PC-9 (cell line): ENCODE measurements at regions of chr2 and their contacts with region 1.

Region 1: DNA sequence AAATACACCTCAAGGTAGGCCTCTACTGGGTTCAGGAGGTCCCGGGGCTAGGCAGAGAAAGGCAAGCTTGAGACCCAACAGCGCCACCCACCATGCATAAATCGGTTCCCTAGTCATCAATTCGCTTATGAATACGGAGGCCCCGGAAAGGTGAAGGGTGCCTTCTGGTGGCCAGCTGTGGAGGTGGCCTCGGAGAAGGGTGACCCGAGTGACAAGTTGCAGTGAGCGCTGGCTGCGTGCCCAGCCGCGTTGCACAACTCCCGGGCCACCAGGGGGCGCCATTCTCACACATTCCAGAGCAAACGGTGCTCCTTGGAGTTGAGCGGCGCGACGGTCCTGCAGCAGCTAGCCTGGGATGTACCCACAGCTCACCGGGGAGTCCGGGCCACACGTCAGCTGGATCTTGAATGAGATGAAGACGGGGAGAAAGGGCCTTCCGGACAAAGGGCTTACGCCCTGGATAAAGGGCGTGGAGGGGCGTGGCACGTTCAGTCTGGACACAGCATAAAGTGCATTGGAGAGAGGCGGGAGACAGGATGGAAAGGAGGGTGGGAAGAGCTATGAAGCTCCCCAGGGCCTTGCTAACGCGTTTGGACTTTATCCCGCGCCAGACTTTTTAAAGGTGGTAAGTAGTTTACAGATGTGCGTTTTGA is 20.4 kb downstream of the TMSB10 start:
- DNase-seq: peak; percentile 92 to 99
- H3K4me3 ChIP-seq: peak overlapping the region; percentile 52
- H3K27ac ChIP-seq: no peak overlapping the region
- H3K4me1 ChIP-seq: peaks cover 9% of the 10 kb centered on the region; the same call in 1 of the 2 replicates
- H3K27me3 ChIP-seq: no peaks in the 10 kb centered on the region
- CTCF ChIP-seq: peak; percentile 97

Region 2: GRCh38 chr2:84288293-84288692 is 637.6 kb before region 1 on chr2:
- CTCF ChIA-PET with region 1: no interaction called
- POLR2A ChIA-PET with region 1: interaction called, 10 read pairs
- intact Hi-C with region 1: no loop called
- DNase-seq: no peak
- H3K4me3 ChIP-seq: no peak overlapping the region
- H3K27ac ChIP-seq: no peak overlapping the region
- H3K4me1 ChIP-seq: no peaks in the 10 kb centered on the region
- H3K27me3 ChIP-seq: no peaks in the 10 kb centered on the region
- CTCF ChIP-seq: no peak

Region 3: GRCh38 chr2:84631047-84631446 is 294.8 kb before region 1 on chr2:
- CTCF ChIA-PET with region 1: no interaction called
- POLR2A ChIA-PET with region 1: no interaction called
- intact Hi-C with region 1: loop called (anchors 5 kb)
- DNase-seq: peak in 1 of 2 experiments; percentile 41
- H3K4me3 ChIP-seq: no peak overlapping the region
- H3K27ac ChIP-seq: no peak overlapping the region
- H3K4me1 ChIP-seq: no peaks in the 10 kb centered on the region
- H3K27me3 ChIP-seq: 0 out of 2 replicates have a peak, but pooled peaks cover 12% of the 10 kb centered on the region
- CTCF ChIP-seq: peak; percentile 71

Region 4: GRCh38 chr2:84881581-84882414 is 44.1 kb before region 1 on chr2:
- CTCF ChIA-PET with region 1: interaction called, 4 read pairs
- POLR2A ChIA-PET with region 1: no interaction called
- intact Hi-C with region 1: loop called (anchors 1 kb)
- DNase-seq: peak; percentile 62 to 63
- H3K4me3 ChIP-seq: peak overlapping the region; percentile 59
- H3K27ac ChIP-seq: no peak overlapping the region
- H3K4me1 ChIP-seq: 0 out of 2 replicates have a peak, but pooled peaks cover 4% of the 10 kb centered on the region
- H3K27me3 ChIP-seq: peaks cover 41% of the 10 kb centered on the region
- CTCF ChIP-seq: peak; percentile 79

Region 5: DNA sequence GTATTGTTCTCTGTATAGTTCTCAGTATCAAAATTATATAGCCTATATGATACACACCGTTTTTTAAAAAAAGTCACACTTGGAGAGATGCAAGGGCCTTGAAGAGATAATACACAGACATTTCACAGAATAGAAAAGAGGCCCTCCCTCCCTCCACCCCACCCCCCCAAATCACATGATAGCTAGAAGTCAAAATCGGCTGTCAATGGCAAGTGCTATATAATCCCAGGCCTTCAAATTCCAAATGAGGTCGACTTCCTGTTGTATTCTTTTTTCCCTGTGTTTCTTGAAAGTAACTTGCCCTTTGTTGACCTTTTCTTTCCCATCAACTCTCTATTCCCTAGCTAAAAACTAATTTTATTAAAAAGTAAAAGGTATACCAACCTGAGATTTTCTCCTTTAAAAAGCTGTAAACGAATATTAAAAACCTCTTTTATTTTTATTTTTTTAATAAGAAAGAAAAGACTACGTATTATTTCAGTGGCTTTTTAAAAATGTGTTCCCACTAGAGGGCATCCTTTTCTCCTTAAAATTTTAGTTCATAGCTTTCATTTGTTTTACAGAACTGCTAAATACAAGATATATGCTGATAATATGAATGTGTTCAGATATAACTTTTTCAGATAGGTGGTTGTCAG is 91.7 kb after region 1 on chr2:
- CTCF ChIA-PET with region 1: interaction called, 10 read pairs
- POLR2A ChIA-PET with region 1: no interaction called
- intact Hi-C with region 1: loop called (anchors 1 kb)
- DNase-seq: no peak
- H3K4me3 ChIP-seq: no peak overlapping the region
- H3K27ac ChIP-seq: peak overlapping the region; percentile 73; the same call in 1 of the 2 replicates
- H3K4me1 ChIP-seq: peaks cover 35% of the 10 kb centered on the region
- H3K27me3 ChIP-seq: no peaks in the 10 kb centered on the region
- CTCF ChIP-seq: peak; percentile 66

Region 6: GRCh38 chr2:85132834-85133637 is 207.2 kb after region 1 on chr2 and contains the start of gene TCF7L1:
- CTCF ChIA-PET with region 1: no interaction called
- POLR2A ChIA-PET with region 1: no interaction called
- intact Hi-C with region 1: loop called (anchors 5 kb)
- DNase-seq: peak in 1 of 2 experiments; percentile 67
- H3K4me3 ChIP-seq: peak within 1 kb of the TSS; percentile 62
- H3K27ac ChIP-seq: no peak within 1 kb of the TSS
- H3K4me1 ChIP-seq: peaks cover 7% of the 10 kb centered on the region
- H3K27me3 ChIP-seq: no peaks in the 10 kb centered on the region
- CTCF ChIP-seq: peak; percentile 72
- total RNA-seq, gene TCF7L1: 2.3 and 2.8 TPM in 2 replicates